HAP-1 (cell line): ENCODE measurements at regions of chr5 and their contacts with region 1.

Region 1: GRCh38 chr5:67246108-67246507 is 49.5 kb upstream of the CD180 start:
- DNase-seq: peak; percentile 41 to 64
- H3K4me3 ChIP-seq: no peak overlapping the region
- H3K4me1 ChIP-seq: no peaks in the 10 kb centered on the region; the same call in 1 of the 2 replicates
- H3K27me3 ChIP-seq: no peaks in the 10 kb centered on the region

Region 2: DNA sequence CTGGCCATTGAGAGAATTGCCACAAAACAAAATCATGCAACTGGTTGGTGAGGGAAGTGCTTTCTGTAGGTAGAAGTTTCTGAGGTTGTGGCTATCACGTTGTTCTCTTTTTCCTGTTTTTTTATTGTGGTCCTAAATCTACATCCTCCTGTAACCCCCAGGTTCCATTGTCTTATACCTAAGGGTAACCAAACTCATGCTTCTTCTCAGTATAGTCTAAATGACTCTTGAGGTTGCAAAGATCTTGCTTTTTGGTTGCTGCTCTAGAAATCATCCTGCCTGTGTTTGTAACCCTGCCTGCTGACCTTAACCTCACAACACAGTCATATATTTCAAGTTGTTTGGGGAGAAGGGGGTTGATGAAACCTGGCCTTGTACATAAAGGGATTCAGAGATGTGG is 322.7 kb before region 1 on chr5:
- in situ Hi-C with region 1: no loop called
- DNase-seq: no peak
- H3K4me3 ChIP-seq: no peak overlapping the region
- H3K4me1 ChIP-seq: no peaks in the 10 kb centered on the region
- H3K27me3 ChIP-seq: peaks cover 13% of the 10 kb centered on the region; the same call in 1 of the 2 replicates

Region 3: DNA sequence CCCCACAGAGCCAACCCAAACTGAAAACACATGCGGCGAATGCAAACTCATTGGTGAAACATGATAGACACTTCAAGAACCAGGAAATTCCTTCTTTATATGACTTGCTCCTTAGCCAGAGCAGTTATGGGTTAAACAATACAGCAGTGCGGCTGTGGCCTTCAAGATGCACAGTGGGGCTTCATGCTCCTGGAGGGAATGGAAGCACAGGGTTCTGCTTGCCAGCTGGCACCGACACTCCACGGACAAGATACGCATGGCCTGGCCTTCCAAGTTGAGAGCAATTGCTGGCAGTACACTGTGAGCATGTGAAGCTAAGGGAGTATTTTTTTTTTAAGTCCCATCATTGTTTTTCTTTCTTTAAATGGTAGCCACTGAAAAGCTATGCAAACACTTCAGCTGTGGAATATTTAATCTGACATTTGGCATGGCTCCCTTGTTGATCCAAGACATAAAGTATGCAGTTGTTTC is 402.1 kb after region 1 on chr5:
- in situ Hi-C with region 1: loop called (anchors 25 kb)
- DNase-seq: no peak
- H3K4me3 ChIP-seq: no peak overlapping the region
- H3K4me1 ChIP-seq: peaks cover 6% of the 10 kb centered on the region
- H3K27me3 ChIP-seq: no peaks in the 10 kb centered on the region

Region 4: DNA sequence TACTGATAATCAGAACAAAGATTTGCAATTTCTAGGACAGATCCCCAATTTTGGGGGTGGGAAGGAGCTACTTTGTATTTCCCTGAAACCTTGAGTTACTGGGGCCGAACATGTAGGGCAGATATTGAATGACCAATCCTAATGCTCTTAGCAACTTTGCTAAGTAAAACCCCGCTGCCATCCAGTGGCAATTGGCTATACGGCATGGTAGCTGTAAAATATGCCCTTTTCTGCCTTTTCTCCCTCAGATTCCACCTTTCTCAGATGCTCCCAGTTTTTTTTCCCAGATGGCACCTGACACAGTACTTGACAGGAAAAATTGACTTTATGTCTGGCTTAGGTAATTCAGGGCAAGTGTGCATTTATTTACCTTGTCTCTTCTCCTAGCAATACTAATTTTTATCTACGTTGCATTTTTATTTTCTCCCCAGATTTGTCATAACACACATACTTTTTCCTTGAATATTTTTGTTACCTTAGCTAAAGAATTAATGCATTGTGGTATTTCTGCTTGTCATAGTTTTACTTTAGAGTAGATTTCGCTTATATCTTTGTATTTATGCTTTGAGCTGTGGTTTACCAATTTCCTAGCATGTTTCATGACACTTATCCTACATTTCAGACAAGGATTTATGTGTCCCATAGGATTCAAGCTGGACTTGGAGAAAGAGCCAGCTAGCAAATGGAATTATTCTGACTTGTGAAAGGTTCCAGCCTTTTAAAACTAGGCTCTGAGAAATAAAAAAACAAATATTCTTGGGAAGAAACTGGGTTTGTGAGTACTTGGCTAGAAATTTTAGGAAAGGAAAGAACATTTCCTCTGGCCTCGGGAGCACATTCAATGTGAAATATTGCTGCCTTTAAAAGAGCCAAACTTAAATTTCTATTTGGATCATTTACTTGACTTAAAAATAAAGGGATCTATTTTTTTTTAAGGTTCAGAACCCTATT is 1006.8 kb after region 1 on chr5:
- in situ Hi-C with region 1: loop called (anchors 10 kb)
- DNase-seq: peak; percentile 52 to 75
- H3K4me3 ChIP-seq: no peak overlapping the region
- H3K4me1 ChIP-seq: peaks cover 3% of the 10 kb centered on the region; the same call in 1 of the 2 replicates
- H3K27me3 ChIP-seq: no peaks in the 10 kb centered on the region